Uterus (tissue), 4 donors: ENCODE measurements at regions of chr3 and their contacts with region 1.

Region 1: DNA sequence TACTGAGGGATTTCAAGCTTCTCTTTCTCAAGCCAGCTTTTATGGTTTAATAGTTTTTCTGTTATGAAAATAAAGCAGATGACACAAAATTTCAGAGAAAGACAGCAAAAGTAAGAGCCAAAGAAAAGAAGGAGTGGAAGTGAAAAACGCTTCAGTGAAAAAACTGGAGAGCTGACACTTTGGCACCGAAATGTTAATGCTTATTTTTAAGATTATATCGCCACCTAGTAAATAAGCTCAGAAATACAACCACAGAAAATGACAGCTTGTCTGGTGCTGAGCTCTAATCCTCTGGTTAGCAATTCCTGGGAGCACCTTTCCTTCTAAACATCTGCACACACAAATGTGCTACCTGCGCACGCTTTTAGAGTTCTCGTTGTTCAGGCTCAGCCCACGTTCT is 101.6 kb downstream of the ZPLD1 start:
- DNase-seq: no peak
- H3K4me3 ChIP-seq: no peak overlapping the region
- H3K27ac ChIP-seq: no peak overlapping the region
- H3K4me1 ChIP-seq: no peaks in the 10 kb centered on the region
- H3K27me3 ChIP-seq: no peaks in the 10 kb centered on the region
- CTCF ChIP-seq: peak; percentile 28 to 53 (median 42)
- POLR2A ChIP-seq: no peak

Region 2: GRCh38 chr3:101235048-101235447 is 1301.4 kb before region 1 on chr3:
- intact Hi-C with region 1: no loop called
- DNase-seq: no peak
- H3K4me3 ChIP-seq: no peak overlapping the region
- H3K27ac ChIP-seq: no peak overlapping the region
- H3K4me1 ChIP-seq: no peaks in the 10 kb centered on the region
- H3K27me3 ChIP-seq: no peaks in the 10 kb centered on the region
- CTCF ChIP-seq: no peak
- POLR2A ChIP-seq: no peak

Region 3: GRCh38 chr3:101803173-101803782 is 733.2 kb before region 1 on chr3:
- intact Hi-C with region 1: loop called (anchors 10 kb)
- DNase-seq: peak in 1 of 2 donors; percentile 67
- H3K4me3 ChIP-seq: no peak overlapping the region
- H3K27ac ChIP-seq: no peak overlapping the region
- H3K4me1 ChIP-seq: no peaks in the 10 kb centered on the region
- H3K27me3 ChIP-seq: no peaks in the 10 kb centered on the region
- CTCF ChIP-seq: peak; percentile 71 to 77 (median 74)
- POLR2A ChIP-seq: no peak

Region 4: DNA sequence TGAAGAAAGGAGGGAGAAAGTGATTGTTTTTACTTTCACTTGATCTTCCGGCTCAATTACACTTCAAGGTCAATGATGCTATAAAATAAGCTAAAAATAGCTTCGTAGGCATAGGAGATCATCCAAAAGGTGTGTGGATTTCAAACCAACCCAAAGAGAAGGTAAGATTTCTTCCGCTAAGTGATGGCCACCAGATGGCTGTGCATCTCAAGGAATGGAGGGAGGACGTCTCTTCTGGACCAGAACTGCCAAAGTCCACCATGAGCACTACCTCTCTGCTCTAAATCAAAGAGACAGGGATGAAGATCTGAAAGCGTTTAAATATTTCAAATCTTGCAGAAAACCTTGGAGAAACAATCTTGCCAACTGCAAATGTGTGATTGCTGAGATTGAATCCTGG is 300.8 kb before region 1 on chr3:
- intact Hi-C with region 1: loop called (anchors 10 kb)
- DNase-seq: no peak
- H3K4me3 ChIP-seq: no peak overlapping the region
- H3K27ac ChIP-seq: no peak overlapping the region
- H3K4me1 ChIP-seq: no peaks in the 10 kb centered on the region
- H3K27me3 ChIP-seq: no peaks in the 10 kb centered on the region
- CTCF ChIP-seq: no peak
- POLR2A ChIP-seq: no peak

Region 5: DNA sequence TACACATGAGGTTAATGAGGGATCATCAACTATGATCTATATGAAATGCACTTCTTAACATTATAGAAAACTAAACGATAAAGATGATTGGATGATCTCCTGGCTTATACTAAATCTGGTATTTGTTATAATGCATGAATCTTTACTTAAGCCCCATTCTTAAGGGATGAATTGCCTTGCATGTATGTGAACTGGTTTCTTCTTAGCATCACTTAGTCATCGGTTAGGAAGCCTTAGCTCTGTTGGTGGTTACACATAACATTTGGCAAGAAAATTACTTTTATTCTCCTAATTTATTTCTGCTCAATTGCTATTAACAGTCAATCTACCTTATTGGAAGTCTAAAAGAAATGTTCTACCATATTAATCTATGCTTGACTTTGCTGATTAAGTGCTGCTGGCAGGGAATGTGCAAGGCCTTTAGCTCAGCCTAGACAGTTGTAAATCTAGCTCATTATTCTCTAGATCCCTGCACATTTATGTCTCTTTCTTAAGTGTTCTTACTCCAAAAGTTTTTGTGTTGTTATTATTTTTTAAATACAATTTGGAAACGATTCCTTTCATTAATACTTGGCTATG is 254.4 kb after region 1 on chr3:
- intact Hi-C with region 1: no loop called
- DNase-seq: no peak
- H3K4me3 ChIP-seq: no peak overlapping the region
- H3K27ac ChIP-seq: no peak overlapping the region
- H3K4me1 ChIP-seq: no peaks in the 10 kb centered on the region
- H3K27me3 ChIP-seq: no peaks in the 10 kb centered on the region
- CTCF ChIP-seq: no peak
- POLR2A ChIP-seq: no peak